ENCODE measurements at regions of chr10 and their contacts with region 1.

Region 1: GRCh38 chr10:3811291-3811870 is 26.4 kb upstream of the KLF6 start:
- DNase-seq: peak; percentile 65
- H3K4me3 Mint-ChIP-seq: peak overlapping the region; percentile 38
- H3K27ac Mint-ChIP-seq: peak overlapping the region; percentile 96
- H3K4me1 Mint-ChIP-seq: peaks cover 79% of the 10 kb centered on the region
- H3K27me3 Mint-ChIP-seq: no peaks in the 10 kb centered on the region

Region 2: DNA sequence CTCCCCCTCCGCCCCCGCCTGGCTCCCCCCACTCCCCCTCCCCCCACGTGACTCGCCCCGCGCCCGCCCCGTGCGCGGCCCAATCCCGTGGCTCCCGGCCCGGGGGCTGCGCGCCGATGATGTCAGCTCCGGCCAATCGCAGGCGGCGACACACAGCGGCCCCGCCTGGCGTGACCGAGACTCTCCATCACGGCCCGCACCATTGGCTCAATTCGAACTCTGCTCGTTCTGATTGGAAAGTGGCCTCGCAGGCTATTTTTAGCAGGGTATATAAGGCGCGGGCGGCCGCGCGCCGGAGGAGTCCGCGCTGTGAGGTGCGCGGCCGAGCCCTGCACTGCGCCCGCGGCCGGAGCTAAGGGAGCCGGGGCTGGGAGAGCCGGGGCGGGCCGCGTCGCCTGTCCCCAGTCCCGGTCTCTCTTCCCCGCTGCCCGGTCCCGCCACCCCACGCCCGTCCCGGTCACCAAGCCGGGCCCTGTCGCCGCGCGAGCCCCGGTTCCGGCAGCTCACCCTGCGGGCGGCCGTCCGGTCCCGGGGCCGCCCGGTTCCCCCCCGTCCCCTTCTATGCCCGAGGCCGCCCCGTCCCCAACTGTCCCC is 26.0 kb before region 1 on chr10:
- intact Hi-C with region 1: loop called (anchors 1 kb)
- DNase-seq: peak; percentile 99
- H3K4me3 Mint-ChIP-seq: peak overlapping the region; percentile 83
- H3K27ac Mint-ChIP-seq: peak overlapping the region; percentile 96
- H3K4me1 Mint-ChIP-seq: peaks cover 32% of the 10 kb centered on the region
- H3K27me3 Mint-ChIP-seq: no peaks in the 10 kb centered on the region

Region 3: DNA sequence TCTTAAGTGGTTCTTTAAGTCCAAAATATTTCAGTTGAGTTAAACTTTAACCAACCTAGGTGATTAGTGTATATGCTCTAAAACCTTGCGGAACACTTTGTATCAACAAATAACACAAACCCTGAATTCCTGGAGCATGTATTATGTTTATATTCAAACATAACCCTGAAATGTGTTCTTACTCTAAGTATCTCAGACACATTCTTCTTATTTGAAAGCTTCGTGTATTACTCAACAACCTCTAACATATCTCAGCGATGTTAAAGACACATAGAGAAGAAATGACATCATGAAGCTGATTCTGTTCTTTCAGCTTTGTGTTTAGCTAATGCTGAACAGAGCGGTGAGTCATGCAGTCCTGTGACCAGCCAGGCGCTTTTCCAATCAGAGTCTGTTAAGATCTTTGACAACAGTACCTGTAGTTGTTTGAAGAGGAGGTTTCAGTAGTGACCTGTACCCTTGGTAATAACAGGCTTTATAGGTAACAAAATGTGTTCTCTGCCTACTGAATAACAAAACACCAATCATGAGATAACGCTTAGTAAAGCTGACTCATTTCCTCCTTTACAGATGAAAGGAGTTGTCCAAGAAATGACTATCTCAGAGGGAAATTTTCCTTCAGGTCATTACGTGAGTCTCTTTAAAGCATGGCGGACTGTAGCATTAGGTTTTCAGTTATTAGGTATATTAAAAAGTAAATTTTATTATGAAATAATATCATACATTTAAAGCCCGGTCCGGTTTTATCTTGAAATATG is 40.9 kb after region 1 on chr10:
- intact Hi-C with region 1: loop called (anchors 1 kb)
- DNase-seq: peak; percentile 59
- H3K4me3 Mint-ChIP-seq: peak overlapping the region; percentile 9
- H3K27ac Mint-ChIP-seq: peak overlapping the region; percentile 79
- H3K4me1 Mint-ChIP-seq: peaks cover 42% of the 10 kb centered on the region
- H3K27me3 Mint-ChIP-seq: no peaks in the 10 kb centered on the region

Region 4: DNA sequence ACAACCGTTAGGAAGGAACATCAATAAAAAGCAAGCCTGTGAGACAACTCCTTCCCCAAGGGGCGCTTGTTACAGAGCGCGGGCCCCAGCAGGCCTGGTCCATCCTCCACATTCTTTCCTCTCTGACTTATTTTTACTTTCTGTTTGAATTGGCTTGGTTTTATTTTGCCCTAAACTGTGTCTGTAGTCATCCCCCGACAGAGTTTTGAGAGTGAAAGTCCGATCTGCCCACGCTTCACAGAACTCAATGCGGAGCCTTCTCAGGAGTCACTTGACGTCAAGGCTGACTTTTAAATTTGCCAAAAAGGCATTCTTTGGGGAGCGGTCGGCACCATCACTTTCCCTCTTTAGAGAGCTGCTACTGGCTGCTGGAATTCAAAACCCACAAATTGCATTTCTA is 123.8 kb after region 1 on chr10:
- intact Hi-C with region 1: loop called (anchors 1 kb)
- DNase-seq: peak; percentile 71
- H3K4me3 Mint-ChIP-seq: peak overlapping the region; percentile 43
- H3K27ac Mint-ChIP-seq: peak overlapping the region; percentile 92
- H3K4me1 Mint-ChIP-seq: peaks cover 58% of the 10 kb centered on the region
- H3K27me3 Mint-ChIP-seq: no peaks in the 10 kb centered on the region

Region 5: GRCh38 chr10:4067531-4067930 is 256.1 kb after region 1 on chr10:
- intact Hi-C with region 1: loop called (anchors 2 kb)
- DNase-seq: no peak
- H3K4me3 Mint-ChIP-seq: no peak overlapping the region
- H3K27ac Mint-ChIP-seq: no peak overlapping the region
- H3K4me1 Mint-ChIP-seq: peaks cover 17% of the 10 kb centered on the region
- H3K27me3 Mint-ChIP-seq: no peaks in the 10 kb centered on the region

Measured in activated T-helper 2 cell treated with anti-CD3 and anti-CD28 coated beads, Interferon-gamma antibody, Interleukin-2, Interleukin-4, amounts not matched to agents 10 μg/mL and 5 μg/mL and 100 μg/mL, durations not matched to agents 14 hours and 24 hours and 36 hours (primary cell).